Endothelial cell of umbilical vein (primary cell): ENCODE measurements at regions of chr1 and their contacts with region 1.

Region 1: GRCh38 chr1:94228640-94229375 is 8.6 kb downstream of the ARHGAP29 start:
- DNase-seq: no peak
- H3K4me3 ChIP-seq: peak overlapping the region in 1 of 3 experiments; percentile 12
- H3K27ac ChIP-seq: no peak overlapping the region
- H3K4me1 ChIP-seq: peaks cover 71% of the 10 kb centered on the region
- H3K27me3 ChIP-seq: no peaks in the 10 kb centered on the region
- CTCF ChIP-seq: no peak
- POLR2A ChIP-seq: no peak

Region 2: GRCh38 chr1:94186946-94187345 is 41.9 kb before region 1 on chr1:
- CTCF ChIA-PET with region 1: interaction called, 10 read pairs
- POLR2A ChIA-PET with region 1: interaction called, 4 read pairs
- dilution Hi-C with region 1: no loop called
- intact Hi-C with region 1: no loop called
- DNase-seq: no peak
- H3K4me3 ChIP-seq: no peak overlapping the region
- H3K27ac ChIP-seq: peak overlapping the region; percentile 5
- H3K4me1 ChIP-seq: peaks cover 25% of the 10 kb centered on the region
- H3K27me3 ChIP-seq: no peaks in the 10 kb centered on the region
- CTCF ChIP-seq: no peak
- POLR2A ChIP-seq: no peak

Region 3: GRCh38 chr1:94218332-94218731 is 10.5 kb before region 1 on chr1:
- CTCF ChIA-PET with region 1: interaction called, 16 read pairs
- POLR2A ChIA-PET with region 1: interaction called, 3 read pairs
- dilution Hi-C with region 1: no loop called
- intact Hi-C with region 1: loop called (anchors 2 kb)
- DNase-seq: peak; percentile 81
- H3K4me3 ChIP-seq: peak overlapping the region in 1 of 3 experiments; percentile 8
- H3K27ac ChIP-seq: peak overlapping the region; percentile 48
- H3K4me1 ChIP-seq: peaks cover 62% of the 10 kb centered on the region
- H3K27me3 ChIP-seq: no peaks in the 10 kb centered on the region
- CTCF ChIP-seq: no peak
- POLR2A ChIP-seq: no peak

Region 4: GRCh38 chr1:94314222-94314858 is 85.5 kb after region 1 on chr1:
- CTCF ChIA-PET with region 1: no interaction called
- POLR2A ChIA-PET with region 1: no interaction called
- dilution Hi-C with region 1: no loop called
- intact Hi-C with region 1: no loop called
- DNase-seq: no peak
- H3K4me3 ChIP-seq: no peak overlapping the region
- H3K27ac ChIP-seq: no peak overlapping the region
- H3K4me1 ChIP-seq: peaks cover 48% of the 10 kb centered on the region
- H3K27me3 ChIP-seq: no peaks in the 10 kb centered on the region
- CTCF ChIP-seq: no peak
- POLR2A ChIP-seq: no peak